Activated B cell treated with CpG ODN at 0.5 μM for 24 hours (primary cell): ENCODE measurements at regions of chr1 and their contacts with region 1.

Region 1: GRCh38 chr1:147494998-147495580 is 46.2 kb upstream of the BCL9 start:
- DNase-seq: peak; percentile 23
- ATAC-seq: peak; percentile 82
- H3K4me3 Mint-ChIP-seq: no peak overlapping the region
- H3K27ac Mint-ChIP-seq: no peak overlapping the region
- H3K4me1 Mint-ChIP-seq: no peaks in the 10 kb centered on the region
- H3K27me3 Mint-ChIP-seq: peaks cover 11% of the 10 kb centered on the region
- CTCF ChIP-seq: no peak

Region 2: DNA sequence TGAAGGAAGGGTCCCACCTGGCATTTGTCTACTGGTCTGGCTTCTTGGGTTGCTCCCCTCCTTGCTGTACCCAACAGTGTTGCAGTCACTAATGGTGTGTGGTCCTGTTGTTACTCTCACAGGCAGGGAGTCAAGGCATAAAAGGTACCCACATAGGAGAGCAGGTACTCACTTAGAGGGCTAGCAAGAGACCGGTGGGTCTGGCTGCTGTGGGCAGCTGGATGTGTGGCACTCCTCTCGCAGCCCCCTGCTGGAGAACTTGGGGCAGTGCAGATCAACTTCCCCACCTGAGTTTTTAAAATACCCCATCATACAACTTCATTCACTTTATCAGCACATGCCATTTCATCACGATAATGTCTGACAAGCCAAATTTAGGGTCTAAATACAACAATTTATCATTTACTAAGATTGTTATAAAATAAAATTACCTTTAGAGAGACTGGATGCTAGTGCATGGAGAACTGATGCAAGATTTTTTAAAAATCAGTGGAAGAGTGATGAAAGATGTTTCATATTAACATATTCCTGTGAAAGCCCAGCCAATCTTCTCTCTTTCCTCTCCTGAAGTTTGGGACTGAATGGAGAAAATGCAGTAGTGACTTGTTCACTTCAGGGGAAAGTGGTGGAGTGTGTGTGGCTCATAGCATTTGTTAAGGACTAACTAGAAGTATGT is 132.5 kb after region 1 on chr1:
- CTCF ChIA-PET with region 1: interaction called, 12 read pairs
- POLR2A ChIA-PET with region 1: no interaction called
- intact Hi-C with region 1: loop called (anchors 1 kb)
- DNase-seq: peak; percentile 27
- ATAC-seq: peak; percentile 56
- H3K4me3 Mint-ChIP-seq: no peak overlapping the region
- H3K27ac Mint-ChIP-seq: no peak overlapping the region
- H3K4me1 Mint-ChIP-seq: peaks cover 11% of the 10 kb centered on the region
- H3K27me3 Mint-ChIP-seq: no peaks in the 10 kb centered on the region
- CTCF ChIP-seq: peak; percentile 43

Region 3: GRCh38 chr1:147640553-147641165 is 145.6 kb after region 1 on chr1:
- CTCF ChIA-PET with region 1: interaction called, 6 read pairs
- POLR2A ChIA-PET with region 1: no interaction called
- intact Hi-C with region 1: loop called (anchors 1 kb)
- DNase-seq: peak; percentile 42
- ATAC-seq: peak; percentile 96
- H3K4me3 Mint-ChIP-seq: no peak overlapping the region
- H3K27ac Mint-ChIP-seq: no peak overlapping the region
- H3K4me1 Mint-ChIP-seq: peaks cover 2% of the 10 kb centered on the region
- H3K27me3 Mint-ChIP-seq: no peaks in the 10 kb centered on the region
- CTCF ChIP-seq: peak; percentile 52

Region 4: GRCh38 chr1:147700042-147701006 is 205.2 kb after region 1 on chr1:
- CTCF ChIA-PET with region 1: no interaction called
- POLR2A ChIA-PET with region 1: no interaction called
- intact Hi-C with region 1: loop called (anchors 1 kb)
- DNase-seq: no peak
- ATAC-seq: peak; percentile 69
- H3K4me3 Mint-ChIP-seq: no peak overlapping the region
- H3K27ac Mint-ChIP-seq: no peak overlapping the region
- H3K4me1 Mint-ChIP-seq: no peaks in the 10 kb centered on the region
- H3K27me3 Mint-ChIP-seq: peaks cover 19% of the 10 kb centered on the region
- CTCF ChIP-seq: no peak